Naive thymus-derived CD4-positive, alpha-beta T cell (primary cell): ENCODE measurements at regions of chr7 and their contacts with region 1.

Region 1: DNA sequence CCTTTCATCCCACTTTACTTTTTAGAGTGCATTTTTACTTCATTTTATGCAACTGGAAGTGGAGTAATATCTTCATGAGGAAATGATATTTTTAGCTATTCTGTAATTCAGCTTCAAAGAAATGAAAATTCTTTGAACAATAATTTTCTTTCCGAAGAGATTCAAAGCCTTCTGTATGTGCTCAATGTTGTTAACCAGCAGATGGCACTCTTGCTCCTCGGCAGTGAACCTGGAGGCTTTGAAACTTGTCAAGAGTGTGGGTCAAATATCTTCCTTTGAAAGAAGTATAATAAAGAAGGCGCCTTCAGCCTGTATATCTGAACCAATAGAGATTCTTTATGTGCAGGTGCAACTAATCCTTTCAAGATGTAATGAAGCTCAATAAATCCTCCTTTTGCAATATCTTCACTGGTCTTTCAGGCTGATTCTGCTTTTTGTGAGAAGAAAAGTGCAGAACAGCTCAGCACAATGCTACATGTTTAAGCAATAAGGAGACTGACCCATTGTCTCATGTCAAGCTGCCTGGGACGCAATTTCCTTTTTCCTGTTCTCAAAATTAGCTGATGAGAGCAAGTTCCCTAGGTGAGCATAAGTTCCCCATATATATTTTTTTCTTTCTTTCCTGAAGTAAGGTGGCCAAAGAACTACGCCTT is 258.4 kb downstream of the SEMA3A start:
- DNase-seq: peak in 8 of 9 donors; percentile 13 to 68 (median 58)
- ATAC-seq: peak; percentile 63
- H3K4me3 ChIP-seq: no peak overlapping the region
- H3K4me3 Mint-ChIP-seq: no peak overlapping the region
- H3K27ac ChIP-seq: no peak overlapping the region
- H3K27ac Mint-ChIP-seq: no peak overlapping the region
- H3K4me1 ChIP-seq: no peaks in the 10 kb centered on the region
- H3K4me1 Mint-ChIP-seq: peaks cover 0 to 5% (median 3%) of the 10 kb centered on the region in 7 donors
- H3K27me3 ChIP-seq: no peaks in the 10 kb centered on the region
- H3K27me3 Mint-ChIP-seq: peaks cover 0 to 4% (median 0%) of the 10 kb centered on the region in 5 donors

Region 2: DNA sequence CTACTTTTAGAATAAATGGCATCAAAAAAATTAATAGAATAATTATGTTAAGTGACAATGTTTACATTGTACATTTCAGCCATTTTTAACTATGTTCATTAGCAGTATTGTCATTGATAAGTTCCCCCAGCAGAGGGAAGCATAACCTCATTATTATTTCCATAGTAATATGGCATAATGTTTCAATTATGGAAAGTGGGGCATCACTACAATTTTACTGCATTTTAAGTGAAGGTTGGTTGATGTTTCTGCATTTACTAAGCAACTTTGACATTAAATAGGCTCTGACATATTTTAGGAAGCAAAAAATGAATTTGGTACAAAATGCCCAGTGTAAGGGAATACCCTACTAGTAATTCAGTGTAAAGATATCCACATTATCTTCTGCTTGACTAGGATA is 40.1 kb after region 1 on chr7:
- CTCF ChIA-PET with region 1: no interaction called
- POLR2A ChIA-PET with region 1: no interaction called
- intact Hi-C with region 1: loop called (anchors 1 kb)
- DNase-seq: peak in 7 of 9 donors; percentile 10 to 67 (median 56)
- ATAC-seq: peak; percentile 69
- H3K4me3 ChIP-seq: no peak overlapping the region
- H3K4me3 Mint-ChIP-seq: no peak overlapping the region
- H3K27ac ChIP-seq: no peak overlapping the region
- H3K27ac Mint-ChIP-seq: no peak overlapping the region
- H3K4me1 ChIP-seq: no peaks in the 10 kb centered on the region
- H3K4me1 Mint-ChIP-seq: peaks cover 0 to 1% (median 0%) of the 10 kb centered on the region in 7 donors
- H3K27me3 ChIP-seq: no peaks in the 10 kb centered on the region
- H3K27me3 Mint-ChIP-seq: no peaks in the 10 kb centered on the region

Region 3: DNA sequence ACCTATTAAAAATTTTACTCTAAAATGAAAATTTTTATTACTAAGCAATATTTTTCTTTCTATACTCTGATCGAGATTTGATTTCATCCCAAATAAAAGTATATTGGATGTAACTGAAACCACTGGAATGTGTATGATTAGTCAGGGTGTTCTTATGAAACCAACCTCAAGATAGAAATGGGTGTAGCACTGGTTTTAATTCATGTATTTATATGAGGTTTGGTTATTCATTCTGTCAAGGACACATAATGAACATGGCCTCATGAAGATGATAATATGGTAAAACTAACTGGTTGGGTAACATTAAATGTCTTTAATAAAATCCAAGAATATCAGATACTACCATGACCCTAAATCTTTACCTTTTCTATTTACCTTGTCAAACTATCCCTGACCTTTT is 60.7 kb after region 1 on chr7:
- CTCF ChIA-PET with region 1: no interaction called
- POLR2A ChIA-PET with region 1: no interaction called
- intact Hi-C with region 1: no loop called
- DNase-seq: no peak
- ATAC-seq: no peak
- H3K4me3 ChIP-seq: no peak overlapping the region
- H3K4me3 Mint-ChIP-seq: no peak overlapping the region
- H3K27ac ChIP-seq: no peak overlapping the region
- H3K27ac Mint-ChIP-seq: no peak overlapping the region
- H3K4me1 ChIP-seq: no peaks in the 10 kb centered on the region
- H3K4me1 Mint-ChIP-seq: no peaks in the 10 kb centered on the region
- H3K27me3 ChIP-seq: no peaks in the 10 kb centered on the region
- H3K27me3 Mint-ChIP-seq: no peaks in the 10 kb centered on the region

Region 4: GRCh38 chr7:85023045-85023712 is 1087.0 kb after region 1 on chr7:
- CTCF ChIA-PET with region 1: interaction called, 44 read pairs
- POLR2A ChIA-PET with region 1: no interaction called
- intact Hi-C with region 1: loop called (anchors 1 kb)
- DNase-seq: peak in 7 of 9 donors; percentile 12 to 60 (median 45)
- ATAC-seq: no peak
- H3K4me3 ChIP-seq: no peak overlapping the region
- H3K4me3 Mint-ChIP-seq: no peak overlapping the region
- H3K27ac ChIP-seq: no peak overlapping the region
- H3K27ac Mint-ChIP-seq: no peak overlapping the region
- H3K4me1 ChIP-seq: no peaks in the 10 kb centered on the region
- H3K4me1 Mint-ChIP-seq: no peaks in the 10 kb centered on the region
- H3K27me3 ChIP-seq: no peaks in the 10 kb centered on the region
- H3K27me3 Mint-ChIP-seq: peaks cover 0 to 8% (median 4%) of the 10 kb centered on the region in 5 donors

Region 5: GRCh38 chr7:85554236-85555178 is 1618.3 kb after region 1 on chr7:
- CTCF ChIA-PET with region 1: interaction called, 6 read pairs
- POLR2A ChIA-PET with region 1: no interaction called
- intact Hi-C with region 1: loop called in 1 of 2 experiments (anchors 1 kb)
- DNase-seq: peak in 6 of 9 donors; percentile 0 to 26 (median 10)
- ATAC-seq: peak; percentile 69
- H3K4me3 ChIP-seq: no peak overlapping the region
- H3K4me3 Mint-ChIP-seq: no peak overlapping the region
- H3K27ac ChIP-seq: no peak overlapping the region
- H3K27ac Mint-ChIP-seq: no peak overlapping the region
- H3K4me1 ChIP-seq: no peaks in the 10 kb centered on the region
- H3K4me1 Mint-ChIP-seq: peaks cover 0 to 1% (median 0%) of the 10 kb centered on the region in 7 donors
- H3K27me3 ChIP-seq: no peaks in the 10 kb centered on the region
- H3K27me3 Mint-ChIP-seq: no peaks in the 10 kb centered on the region

Region 6: GRCh38 chr7:85750454-85750949 is 1814.3 kb after region 1 on chr7:
- CTCF ChIA-PET with region 1: no interaction called
- POLR2A ChIA-PET with region 1: no interaction called
- intact Hi-C with region 1: loop called in 1 of 2 experiments (anchors 2 kb)
- DNase-seq: peak in 1 of 9 donors; percentile 30
- ATAC-seq: peak; percentile 67
- H3K4me3 ChIP-seq: no peak overlapping the region
- H3K4me3 Mint-ChIP-seq: no peak overlapping the region
- H3K27ac ChIP-seq: no peak overlapping the region
- H3K27ac Mint-ChIP-seq: no peak overlapping the region
- H3K4me1 ChIP-seq: no peaks in the 10 kb centered on the region
- H3K4me1 Mint-ChIP-seq: no peaks in the 10 kb centered on the region
- H3K27me3 ChIP-seq: no peaks in the 10 kb centered on the region
- H3K27me3 Mint-ChIP-seq: no peaks in the 10 kb centered on the region